ENCODE measurements at regions of chr12 and their contacts with region 1.

Region 1: DNA sequence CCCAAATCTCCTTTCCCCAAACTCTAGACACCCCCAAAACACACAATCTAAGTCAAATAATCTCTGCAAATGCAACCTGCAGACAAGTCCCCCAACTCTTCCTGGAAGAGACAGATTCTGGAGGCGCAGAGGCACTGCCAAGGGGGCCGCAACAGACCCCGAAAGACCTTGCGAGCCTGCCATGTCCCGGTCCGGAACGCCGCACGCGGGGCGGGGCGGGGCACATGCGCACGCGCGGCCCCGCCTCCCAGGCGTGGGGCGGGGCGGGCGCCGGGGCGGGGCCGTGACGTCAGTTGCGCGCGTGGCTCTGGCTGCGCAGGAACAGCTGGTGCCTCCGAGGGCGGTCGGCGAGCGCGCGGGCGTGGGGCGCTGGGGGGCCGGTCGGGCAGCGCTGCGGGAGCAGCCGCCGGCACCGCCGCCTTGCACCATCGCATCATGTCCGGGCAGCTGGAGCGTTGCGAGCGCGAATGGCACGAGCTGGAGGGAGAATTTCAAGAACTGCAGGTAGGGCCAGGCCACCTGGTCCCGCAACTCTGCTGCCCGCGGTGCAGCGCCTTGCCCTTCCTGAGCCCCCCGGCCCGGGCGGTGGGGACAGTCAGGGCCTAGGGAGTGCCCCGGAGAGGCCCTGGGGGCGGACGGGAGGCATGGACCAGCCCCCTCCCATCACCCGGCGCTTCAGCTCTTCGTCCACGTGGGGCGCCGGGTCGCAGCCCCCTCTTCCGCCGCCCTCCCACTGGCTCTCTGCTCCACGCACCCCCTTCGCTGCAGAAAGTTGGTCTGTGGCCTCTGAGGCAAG is at the start of gene TMEM120B:
- DNase-seq: peak; percentile 90
- ATAC-seq: peak; percentile 87
- H3K4me3 Mint-ChIP-seq: peak within 1 kb of the TSS; percentile 95
- H3K27ac Mint-ChIP-seq: peak within 1 kb of the TSS; percentile 91
- H3K4me1 Mint-ChIP-seq: peaks cover 16% of the 10 kb centered on the region
- H3K27me3 Mint-ChIP-seq: no peaks in the 10 kb centered on the region
- total RNA-seq, gene TMEM120B: 8.8 to 11.7 TPM

Region 2: DNA sequence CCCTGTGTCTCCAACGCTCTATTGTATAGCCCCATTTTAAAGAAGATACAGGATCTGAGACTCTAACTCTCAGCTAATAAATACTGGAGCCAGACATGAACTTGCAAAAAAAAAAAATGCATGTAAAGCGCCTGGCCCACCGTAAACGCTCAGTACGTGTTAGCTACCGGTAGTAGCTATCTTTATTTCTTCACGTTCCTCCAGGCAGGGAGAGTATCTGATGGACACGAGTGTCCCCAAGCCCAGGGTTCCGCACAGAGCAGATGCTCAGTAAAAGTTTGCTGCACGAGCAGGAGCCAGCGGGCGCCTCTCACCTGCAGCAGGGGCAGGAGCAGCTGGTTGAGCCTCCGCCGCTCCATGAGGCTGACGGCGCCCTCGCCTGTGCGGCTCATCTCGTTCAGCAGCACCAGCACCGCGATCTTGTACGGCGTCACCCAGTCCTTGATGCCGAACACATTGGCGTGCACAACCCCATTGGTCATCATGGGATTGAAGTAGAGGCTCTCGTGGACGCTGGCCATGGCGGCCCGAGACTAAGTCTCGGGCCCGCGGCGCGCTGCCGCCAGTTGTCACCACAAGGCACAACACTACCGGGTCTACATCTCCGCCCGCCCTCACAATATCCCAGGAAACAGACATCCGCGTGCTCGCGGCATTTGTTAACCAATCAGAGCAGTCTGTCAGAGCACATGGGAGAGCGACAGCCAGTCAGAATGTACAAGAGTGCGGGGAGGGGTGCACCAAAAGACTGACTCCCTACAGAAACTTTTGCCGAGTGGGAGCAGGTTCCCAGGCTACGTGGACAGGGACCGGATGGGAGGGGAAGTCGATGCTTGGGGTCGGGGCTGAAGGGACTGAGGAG is 360.6 kb before region 1 on chr12 and contains the start of gene ANAPC5:
- CTCF ChIA-PET with region 1: no interaction called
- POLR2A ChIA-PET with region 1: no interaction called
- intact Hi-C with region 1: loop called in 1 of 2 experiments (anchors 1 kb)
- DNase-seq: peak; percentile 94
- ATAC-seq: peak; percentile 99
- H3K4me3 Mint-ChIP-seq: peak within 1 kb of the TSS; percentile 92
- H3K27ac Mint-ChIP-seq: peak within 1 kb of the TSS; percentile 97
- H3K4me1 Mint-ChIP-seq: peaks cover 24% of the 10 kb centered on the region
- H3K27me3 Mint-ChIP-seq: peaks cover under 1% of the 10 kb centered on the region
- total RNA-seq, gene ANAPC5: 113 to 118 TPM

Region 3: DNA sequence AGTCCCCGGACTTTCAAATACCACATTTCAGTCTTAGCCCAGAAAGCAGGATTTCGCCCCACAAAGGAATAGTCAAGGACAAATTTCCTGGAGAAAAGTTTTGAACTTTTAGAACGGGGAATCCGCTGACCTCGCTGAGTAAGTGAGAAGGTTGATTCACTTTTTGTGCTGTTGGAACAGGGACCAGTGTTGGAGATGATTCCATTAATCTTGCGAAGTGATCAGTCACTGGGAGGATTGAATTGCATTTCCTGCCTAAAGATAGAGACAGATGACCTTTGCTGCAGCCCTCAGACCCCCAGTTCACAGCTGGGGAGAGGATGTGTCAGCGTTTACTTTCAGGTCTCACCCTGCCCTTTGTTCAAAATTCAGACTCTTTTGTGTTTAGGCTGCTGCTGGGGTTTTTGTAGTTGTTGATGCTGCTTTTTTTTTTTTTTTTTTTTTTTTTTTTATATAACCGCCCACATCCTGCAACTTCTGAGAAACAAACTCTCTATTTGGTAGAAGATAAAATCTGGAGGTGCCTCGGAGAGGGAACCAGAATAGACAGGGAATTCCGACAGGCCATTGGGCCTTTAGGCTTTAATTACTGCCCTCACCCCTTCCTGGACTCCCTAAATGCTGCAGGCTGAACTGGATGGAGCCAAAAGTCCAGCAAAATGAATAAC is 122.0 kb before region 1 on chr12:
- CTCF ChIA-PET with region 1: no interaction called
- POLR2A ChIA-PET with region 1: no interaction called
- intact Hi-C with region 1: loop called in 1 of 2 experiments (anchors 1 kb)
- DNase-seq: peak; percentile 79
- ATAC-seq: peak; percentile 82
- H3K4me3 Mint-ChIP-seq: peak overlapping the region; percentile 75
- H3K27ac Mint-ChIP-seq: peak overlapping the region; percentile 98
- H3K4me1 Mint-ChIP-seq: peaks cover 32% of the 10 kb centered on the region
- H3K27me3 Mint-ChIP-seq: no peaks in the 10 kb centered on the region

Region 4: GRCh38 chr12:121697098-121697698 is 15.5 kb before region 1 on chr12:
- CTCF ChIA-PET with region 1: interaction called, 12 read pairs
- POLR2A ChIA-PET with region 1: no interaction called
- intact Hi-C with region 1: no loop called
- DNase-seq: peak; percentile 27
- ATAC-seq: no peak
- H3K4me3 Mint-ChIP-seq: no peak overlapping the region
- H3K27ac Mint-ChIP-seq: no peak overlapping the region
- H3K4me1 Mint-ChIP-seq: no peaks in the 10 kb centered on the region
- H3K27me3 Mint-ChIP-seq: no peaks in the 10 kb centered on the region

Region 5: GRCh38 chr12:121811434-121812319 is 99.0 kb after region 1 on chr12:
- CTCF ChIA-PET with region 1: interaction called, 16 read pairs
- POLR2A ChIA-PET with region 1: no interaction called
- intact Hi-C with region 1: loop called in 1 of 2 experiments (anchors 2 kb)
- DNase-seq: peak; percentile 82
- ATAC-seq: peak; percentile 86
- H3K4me3 Mint-ChIP-seq: peak overlapping the region; percentile 73
- H3K27ac Mint-ChIP-seq: peak overlapping the region; percentile 69
- H3K4me1 Mint-ChIP-seq: peaks cover 40% of the 10 kb centered on the region
- H3K27me3 Mint-ChIP-seq: no peaks in the 10 kb centered on the region

Measured in activated CD4-positive, alpha-beta T cell treated with anti-CD3 and anti-CD28 coated beads for 36 hours (primary cell).